Caco-2 (cell line): ENCODE measurements at regions of chrX and their contacts with region 1.

Region 1: GRCh38 chrX:103845165-103845653 is 13.2 kb upstream of the RAB9B start:
- DNase-seq: peak; percentile 48 to 61
- H3K4me3 ChIP-seq: no peak overlapping the region; the same call in 1 of the 2 replicates
- H3K4me3 Mint-ChIP-seq: no peak overlapping the region
- H3K27ac Mint-ChIP-seq: no peak overlapping the region
- H3K4me1 ChIP-seq: no peaks in the 10 kb centered on the region
- H3K4me1 Mint-ChIP-seq: no peaks in the 10 kb centered on the region
- H3K27me3 ChIP-seq: no peaks in the 10 kb centered on the region
- H3K27me3 Mint-ChIP-seq: peaks cover 2% of the 10 kb centered on the region
- CTCF ChIP-seq: peak; percentile 49 to 64

Region 2: GRCh38 chrX:103918581-103919269 is 73.5 kb after region 1 on chrX:
- CTCF ChIA-PET with region 1: interaction called, 3 read pairs
- POLR2A ChIA-PET with region 1: no interaction called
- intact Hi-C with region 1: loop called (anchors 1 kb)
- DNase-seq: peak; percentile 61
- H3K4me3 ChIP-seq: peak overlapping the region; percentile 42
- H3K4me3 Mint-ChIP-seq: peak overlapping the region; percentile 94
- H3K27ac Mint-ChIP-seq: peak overlapping the region; percentile 53
- H3K4me1 ChIP-seq: no peaks in the 10 kb centered on the region; the same call in 1 of the 2 replicates
- H3K4me1 Mint-ChIP-seq: peaks cover 3% of the 10 kb centered on the region
- H3K27me3 ChIP-seq: no peaks in the 10 kb centered on the region
- H3K27me3 Mint-ChIP-seq: no peaks in the 10 kb centered on the region
- CTCF ChIP-seq: no peak

Region 3: GRCh38 chrX:103932133-103932532 is 86.9 kb after region 1 on chrX:
- CTCF ChIA-PET with region 1: no interaction called
- POLR2A ChIA-PET with region 1: no interaction called
- intact Hi-C with region 1: loop called (anchors 5 kb)
- DNase-seq: no peak
- H3K4me3 ChIP-seq: no peak overlapping the region
- H3K4me3 Mint-ChIP-seq: no peak overlapping the region
- H3K27ac Mint-ChIP-seq: no peak overlapping the region
- H3K4me1 ChIP-seq: no peaks in the 10 kb centered on the region
- H3K4me1 Mint-ChIP-seq: no peaks in the 10 kb centered on the region
- H3K27me3 ChIP-seq: no peaks in the 10 kb centered on the region
- H3K27me3 Mint-ChIP-seq: peaks cover 2% of the 10 kb centered on the region
- CTCF ChIP-seq: no peak

Region 4: DNA sequence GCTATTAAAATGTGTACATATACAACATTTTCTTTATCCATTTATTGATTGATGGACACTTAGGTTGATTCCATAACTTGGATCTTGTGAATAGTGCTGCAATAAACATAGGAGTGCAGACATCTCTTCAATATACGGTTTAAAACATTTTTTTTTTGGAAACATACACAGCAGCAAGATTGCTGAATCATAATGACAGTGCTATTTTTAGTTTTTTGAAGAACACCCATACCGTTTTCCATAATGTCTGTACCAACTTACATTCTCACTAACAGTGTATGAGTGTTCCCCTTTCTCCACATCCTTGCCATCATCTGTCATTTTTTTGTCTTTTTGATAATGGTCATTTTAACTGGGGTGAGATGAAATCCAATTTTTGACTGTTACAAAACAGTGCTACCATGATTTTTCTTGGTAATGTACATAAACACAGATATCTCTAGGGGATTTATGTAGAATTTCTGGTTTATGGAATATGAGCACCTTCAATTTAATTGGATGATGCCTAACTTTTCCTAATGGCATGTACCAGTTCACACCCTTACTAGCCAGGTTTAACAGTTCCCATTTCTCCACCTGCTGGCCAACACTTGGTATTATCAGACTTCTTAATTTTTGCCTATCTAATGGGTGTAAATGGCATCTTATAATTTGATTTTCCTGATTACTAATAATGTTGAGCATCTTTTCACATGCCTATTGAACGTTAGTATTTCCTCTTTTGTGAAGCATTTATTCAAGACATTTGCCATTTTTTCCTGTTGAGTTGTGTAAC is 96.2 kb after region 1 on chrX:
- CTCF ChIA-PET with region 1: interaction called, 15 read pairs
- POLR2A ChIA-PET with region 1: no interaction called
- intact Hi-C with region 1: loop called (anchors 1 kb)
- DNase-seq: peak in 1 of 2 experiments; percentile 19
- H3K4me3 ChIP-seq: no peak overlapping the region
- H3K4me3 Mint-ChIP-seq: no peak overlapping the region
- H3K27ac Mint-ChIP-seq: no peak overlapping the region
- H3K4me1 ChIP-seq: no peaks in the 10 kb centered on the region
- H3K4me1 Mint-ChIP-seq: no peaks in the 10 kb centered on the region
- H3K27me3 ChIP-seq: no peaks in the 10 kb centered on the region
- H3K27me3 Mint-ChIP-seq: peaks cover 6% of the 10 kb centered on the region
- CTCF ChIP-seq: peak in 1 of 2 experiments; percentile 29

Region 5: GRCh38 chrX:104113222-104113965 is 268.2 kb after region 1 on chrX:
- CTCF ChIA-PET with region 1: interaction called, 8 read pairs
- POLR2A ChIA-PET with region 1: no interaction called
- intact Hi-C with region 1: loop called (anchors 5 kb)
- DNase-seq: peak; percentile 58 to 67
- H3K4me3 ChIP-seq: peak overlapping the region; percentile 64
- H3K4me3 Mint-ChIP-seq: peak overlapping the region; percentile 89
- H3K27ac Mint-ChIP-seq: no peak overlapping the region
- H3K4me1 ChIP-seq: no peaks in the 10 kb centered on the region
- H3K4me1 Mint-ChIP-seq: no peaks in the 10 kb centered on the region
- H3K27me3 ChIP-seq: no peaks in the 10 kb centered on the region
- H3K27me3 Mint-ChIP-seq: no peaks in the 10 kb centered on the region
- CTCF ChIP-seq: peak; percentile 26 to 65

Region 6: DNA sequence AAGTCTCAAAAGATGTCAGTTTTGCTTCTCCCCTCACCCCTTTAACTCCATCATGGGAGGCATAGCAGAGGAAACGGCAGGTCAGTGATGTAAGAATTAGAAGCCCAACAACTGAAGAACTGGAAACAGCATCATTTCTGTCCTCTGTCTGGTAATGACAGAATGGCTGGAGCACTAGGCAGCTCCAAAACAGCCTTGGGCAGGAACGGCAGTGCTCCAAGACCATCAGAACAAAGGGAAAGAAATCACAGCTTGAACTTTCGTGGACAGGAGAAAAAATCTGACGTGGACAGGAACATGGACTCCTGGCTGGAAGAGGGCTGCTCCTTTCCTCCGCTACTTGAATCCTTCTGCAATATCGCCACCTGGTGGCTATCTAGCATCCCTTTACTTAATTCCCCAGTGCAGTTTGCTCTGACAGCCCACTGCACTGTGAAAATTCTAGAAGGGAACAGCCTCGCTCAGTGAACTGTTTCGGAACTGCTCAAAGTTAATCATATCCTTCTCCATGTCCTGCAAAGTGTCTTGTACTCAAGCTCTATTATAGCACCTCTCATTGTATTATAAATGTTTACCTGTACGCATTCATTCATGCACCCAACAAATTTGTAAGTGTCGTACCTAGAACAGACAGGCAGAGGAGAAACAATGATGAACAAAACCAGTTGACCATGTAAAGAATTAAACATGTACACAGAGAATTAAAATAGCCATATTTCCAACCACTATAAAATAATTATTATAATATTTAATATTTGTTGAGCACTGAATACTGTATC is 291.2 kb after region 1 on chrX:
- CTCF ChIA-PET with region 1: no interaction called
- POLR2A ChIA-PET with region 1: no interaction called
- intact Hi-C with region 1: loop called (anchors 1 kb)
- DNase-seq: peak; percentile 64 to 72
- H3K4me3 ChIP-seq: peak overlapping the region; percentile 30; the same call in 1 of the 2 replicates
- H3K4me3 Mint-ChIP-seq: peak overlapping the region; percentile 68
- H3K27ac Mint-ChIP-seq: no peak overlapping the region
- H3K4me1 ChIP-seq: no peaks in the 10 kb centered on the region
- H3K4me1 Mint-ChIP-seq: no peaks in the 10 kb centered on the region
- H3K27me3 ChIP-seq: no peaks in the 10 kb centered on the region
- H3K27me3 Mint-ChIP-seq: no peaks in the 10 kb centered on the region
- CTCF ChIP-seq: peak; percentile 44 to 56